Astrocyte of the cerebellum (primary cell): ENCODE measurements at regions of chr20 and their contacts with region 1.

Region 1: GRCh38 chr20:478949-479429 is 16.7 kb upstream of the TBC1D20 start:
- DNase-seq: peak; percentile 61
- H3K4me3 ChIP-seq: no peak overlapping the region
- CTCF ChIP-seq: peak; percentile 41

Region 2: DNA sequence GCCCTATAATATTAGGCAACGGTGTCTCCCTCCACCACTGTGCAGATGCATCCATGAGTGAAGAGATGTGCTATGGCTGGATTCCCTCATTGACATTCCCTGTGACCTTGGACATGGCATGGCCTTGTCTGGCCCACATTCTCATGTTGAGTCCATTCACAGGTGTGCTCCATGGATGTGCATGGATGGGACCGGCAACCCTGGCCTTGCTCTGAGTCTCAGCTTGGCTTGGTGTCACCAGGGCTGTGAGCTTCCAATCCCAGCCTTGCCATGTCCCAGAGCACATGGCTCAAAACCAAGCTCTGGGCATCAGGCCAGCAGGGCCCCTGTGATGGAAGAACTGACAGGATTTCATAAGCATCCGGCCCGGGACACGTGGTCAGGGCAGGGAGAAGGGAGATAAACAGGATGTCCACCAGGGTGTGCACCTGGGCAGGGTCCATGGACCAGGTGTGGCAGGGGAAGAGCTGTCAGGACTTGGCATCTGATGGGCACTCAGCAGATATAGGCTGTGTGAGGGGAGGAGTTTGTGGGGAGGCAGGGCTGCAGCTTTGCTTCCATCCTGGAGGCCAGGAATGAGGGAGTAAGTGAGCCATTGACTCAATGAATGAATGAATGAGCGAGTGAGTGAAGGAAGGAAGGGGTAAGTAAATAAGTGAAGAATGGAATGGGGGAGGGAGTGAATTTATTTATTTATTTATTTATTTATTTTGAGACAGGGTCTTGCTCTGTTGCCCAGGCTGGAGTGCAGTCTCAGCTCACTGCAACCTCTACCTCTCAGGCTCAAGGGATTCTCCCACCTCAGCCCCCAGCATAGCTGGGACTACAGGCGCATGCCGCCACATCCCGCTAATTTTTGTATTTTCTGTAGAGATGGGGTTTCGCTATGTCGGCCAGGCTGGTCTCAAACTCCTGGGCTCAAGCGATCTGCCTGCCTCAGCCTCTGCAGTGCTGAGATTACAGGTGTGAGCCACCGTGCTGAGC is 116.4 kb before region 1 on chr20:
- in situ Hi-C with region 1: loop called (anchors 5 kb)
- DNase-seq: no peak
- H3K4me3 ChIP-seq: no peak overlapping the region
- CTCF ChIP-seq: peak; percentile 24